CD4-positive, alpha-beta T cell (primary cell): ENCODE measurements at regions of chr19 and their contacts with region 1.

Region 1: GRCh38 chr19:12495002-12495802 is 10.6 kb upstream of the ZNF709 start:
- DNase-seq: peak; percentile 85 to 97 (median 91)
- ATAC-seq: peak; percentile 99
- H3K4me3 ChIP-seq: peak overlapping the region; percentile 67
- H3K4me3 Mint-ChIP-seq: peak overlapping the region; percentile 91
- H3K27ac ChIP-seq: peak overlapping the region; percentile 63 to 68
- H3K27ac Mint-ChIP-seq: peak overlapping the region; percentile 42
- H3K4me1 ChIP-seq: peaks cover 13% of the 10 kb centered on the region
- H3K4me1 Mint-ChIP-seq: peaks cover 12% of the 10 kb centered on the region
- H3K27me3 ChIP-seq: no peaks in the 10 kb centered on the region
- H3K27me3 Mint-ChIP-seq: no peaks in the 10 kb centered on the region
- CTCF ChIP-seq: peak; percentile 47

Region 2: GRCh38 chr19:12478234-12478941 is 16.8 kb before region 1 on chr19:
- CTCF ChIA-PET with region 1: interaction called, 20 read pairs
- POLR2A ChIA-PET with region 1: interaction called, 3 read pairs
- intact Hi-C with region 1: no loop called
- DNase-seq: peak in 3 of 14 experiments; percentile 14 to 30 (median 23)
- ATAC-seq: peak; percentile 76
- H3K4me3 ChIP-seq: no peak overlapping the region
- H3K4me3 Mint-ChIP-seq: peak overlapping the region; percentile 42
- H3K27ac ChIP-seq: peak overlapping the region; percentile 20 to 51
- H3K27ac Mint-ChIP-seq: peak overlapping the region; percentile 72
- H3K4me1 ChIP-seq: peaks cover 28% of the 10 kb centered on the region
- H3K4me1 Mint-ChIP-seq: peaks cover 50% of the 10 kb centered on the region
- H3K27me3 ChIP-seq: no peaks in the 10 kb centered on the region
- H3K27me3 Mint-ChIP-seq: no peaks in the 10 kb centered on the region
- CTCF ChIP-seq: no peak

Region 3: DNA sequence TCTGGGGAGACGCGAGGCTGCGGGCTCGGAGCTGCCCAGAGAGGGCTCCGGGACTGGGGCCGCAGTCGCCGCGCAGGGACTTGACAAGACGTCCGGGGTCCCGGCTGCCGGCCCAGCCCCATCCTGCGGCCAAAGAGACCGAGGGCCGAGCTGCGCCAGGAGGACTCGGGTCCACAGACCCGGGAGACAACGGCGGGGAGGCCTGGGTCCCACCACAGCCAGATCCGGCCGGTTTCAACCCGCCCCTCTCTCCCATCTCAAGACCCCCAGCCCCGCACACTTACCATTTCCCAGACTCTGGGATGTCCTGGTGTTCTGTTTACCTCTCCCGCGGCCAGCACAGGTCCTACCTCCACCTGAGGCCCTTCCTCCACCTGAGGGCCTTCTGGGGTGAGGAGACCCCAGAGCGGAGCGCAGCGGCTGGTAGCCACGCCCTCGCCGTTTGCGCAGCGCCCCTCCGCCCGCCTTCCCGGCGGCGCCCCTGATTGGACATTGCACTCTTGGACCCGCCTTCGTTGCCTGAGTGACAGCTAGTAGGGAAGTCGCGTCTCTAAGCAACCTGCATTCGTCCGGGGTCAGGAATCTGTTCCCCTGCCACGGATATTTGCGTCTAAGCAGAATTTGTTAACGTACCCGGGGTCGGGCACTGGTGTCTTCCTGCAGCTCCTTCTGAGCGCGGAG is 10.7 kb before region 1 on chr19 and contains the start of gene ZNF709:
- CTCF ChIA-PET with region 1: interaction called, 20 read pairs
- POLR2A ChIA-PET with region 1: interaction called, 17 read pairs
- intact Hi-C with region 1: loop called in 1 of 2 experiments (anchors 1 kb)
- DNase-seq: peak; percentile 73 to 93 (median 86)
- ATAC-seq: peak; percentile 98
- H3K4me3 ChIP-seq: peak within 1 kb of the TSS; percentile 99
- H3K4me3 Mint-ChIP-seq: peak within 1 kb of the TSS; percentile 98
- H3K27ac ChIP-seq: peak within 1 kb of the TSS; percentile 52 to 68
- H3K27ac Mint-ChIP-seq: peak within 1 kb of the TSS; percentile 97
- H3K4me1 ChIP-seq: peaks cover 37% of the 10 kb centered on the region
- H3K4me1 Mint-ChIP-seq: peaks cover 36% of the 10 kb centered on the region
- H3K27me3 ChIP-seq: no peaks in the 10 kb centered on the region
- H3K27me3 Mint-ChIP-seq: no peaks in the 10 kb centered on the region
- CTCF ChIP-seq: no peak
- total RNA-seq, gene ZNF709: 3.5 to 3.7 TPM

Region 4: DNA sequence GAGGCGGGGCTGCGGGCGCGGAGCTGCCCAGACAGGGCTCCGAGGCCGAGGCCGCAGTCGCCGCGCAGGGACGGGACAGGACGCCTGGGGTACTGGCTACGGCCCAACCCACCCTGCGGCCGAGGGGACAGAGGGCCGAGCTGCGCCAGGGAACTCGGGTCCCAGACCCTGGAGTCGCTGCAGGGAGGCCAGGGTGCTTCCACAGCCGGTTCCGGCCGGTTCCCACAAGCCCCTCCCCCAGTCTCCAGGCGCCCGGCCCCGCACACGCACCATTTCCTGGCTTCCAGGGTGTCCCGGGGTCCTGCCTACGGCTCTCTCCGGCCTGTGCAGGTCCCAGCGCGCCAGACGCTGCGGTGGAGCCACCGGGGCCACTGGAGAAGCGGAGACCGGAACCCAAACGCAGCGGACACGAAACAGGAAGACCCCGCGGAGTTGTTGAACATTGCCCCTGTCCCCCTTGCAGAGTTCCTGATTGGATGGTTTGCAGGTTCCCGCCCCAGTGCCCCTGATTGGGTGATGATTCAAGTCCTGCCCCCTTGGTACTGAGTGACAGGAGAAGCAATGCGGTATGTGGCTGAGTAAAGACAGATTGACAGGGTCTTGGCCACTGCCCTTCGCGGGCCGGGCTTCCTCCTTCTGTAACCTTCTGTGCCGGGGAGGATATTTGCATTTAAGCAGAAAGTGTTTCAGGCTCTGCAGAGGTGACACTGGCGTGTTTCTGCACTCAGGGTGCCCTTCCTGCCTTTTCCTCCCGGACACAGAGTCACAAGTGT is 56.0 kb after region 1 on chr19 and contains the start of gene ZNF564:
- CTCF ChIA-PET with region 1: no interaction called
- POLR2A ChIA-PET with region 1: interaction called, 10 read pairs
- intact Hi-C with region 1: loop called in 1 of 2 experiments (anchors 5 kb)
- DNase-seq: peak; percentile 80 to 98 (median 86)
- ATAC-seq: peak; percentile 97
- H3K4me3 ChIP-seq: peak within 1 kb of the TSS; percentile 98
- H3K4me3 Mint-ChIP-seq: peak within 1 kb of the TSS; percentile 89
- H3K27ac ChIP-seq: peak within 1 kb of the TSS; percentile 77 to 87
- H3K27ac Mint-ChIP-seq: peak within 1 kb of the TSS; percentile 85
- H3K4me1 ChIP-seq: peaks cover 43% of the 10 kb centered on the region
- H3K4me1 Mint-ChIP-seq: peaks cover 46% of the 10 kb centered on the region
- H3K27me3 ChIP-seq: no peaks in the 10 kb centered on the region
- H3K27me3 Mint-ChIP-seq: no peaks in the 10 kb centered on the region
- CTCF ChIP-seq: no peak
- total RNA-seq, gene ZNF564: 17.3 to 18.0 TPM

Region 5: GRCh38 chr19:12736995-12737834 is 242.0 kb after region 1 on chr19 and contains the start of gene GET3:
- CTCF ChIA-PET with region 1: no interaction called
- POLR2A ChIA-PET with region 1: no interaction called
- intact Hi-C with region 1: no loop called
- DNase-seq: peak; percentile 66 to 92 (median 74)
- ATAC-seq: peak; percentile 82
- H3K4me3 ChIP-seq: peak within 1 kb of the TSS; percentile 79
- H3K4me3 Mint-ChIP-seq: peak within 1 kb of the TSS; percentile 96
- H3K27ac ChIP-seq: peak within 1 kb of the TSS; percentile 76
- H3K27ac Mint-ChIP-seq: peak within 1 kb of the TSS; percentile 86
- H3K4me1 ChIP-seq: peaks cover 52% of the 10 kb centered on the region
- H3K4me1 Mint-ChIP-seq: peaks cover 38% of the 10 kb centered on the region
- H3K27me3 ChIP-seq: no peaks in the 10 kb centered on the region
- H3K27me3 Mint-ChIP-seq: no peaks in the 10 kb centered on the region
- CTCF ChIP-seq: no peak
- total RNA-seq, gene GET3: 13.9 to 14.5 TPM